ENCODE measurements at regions of chr2 and their contacts with region 1.

Region 1: DNA sequence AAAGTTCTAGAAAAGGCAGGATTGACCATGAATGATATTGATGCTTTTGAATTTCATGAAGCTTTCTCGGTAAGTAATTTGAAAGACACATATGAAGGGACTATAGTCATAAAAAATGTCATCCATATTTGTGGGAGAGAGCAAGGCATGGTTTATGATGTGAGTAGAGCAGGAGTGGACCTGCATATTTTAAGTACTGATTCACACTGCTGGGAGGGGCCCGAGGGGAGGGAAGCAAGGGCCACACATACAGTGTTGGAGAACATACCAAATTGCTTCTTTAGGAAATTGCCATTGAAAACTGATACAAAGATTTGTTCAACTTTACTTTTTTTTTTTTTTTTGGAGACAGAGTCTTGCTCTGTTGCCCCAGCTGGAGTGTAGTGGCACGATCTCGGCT is 39.4 kb downstream of the HADHB start:
- DNase-seq: no peak
- ATAC-seq: peak in 2 of 4 donors; percentile 26 to 41
- H3K4me3 ChIP-seq: no peak overlapping the region
- H3K27ac ChIP-seq: no peak overlapping the region
- H3K4me1 ChIP-seq: no peaks in the 10 kb centered on the region
- H3K27me3 ChIP-seq: no peaks in the 10 kb centered on the region
- CTCF ChIP-seq: no peak

Region 2: DNA sequence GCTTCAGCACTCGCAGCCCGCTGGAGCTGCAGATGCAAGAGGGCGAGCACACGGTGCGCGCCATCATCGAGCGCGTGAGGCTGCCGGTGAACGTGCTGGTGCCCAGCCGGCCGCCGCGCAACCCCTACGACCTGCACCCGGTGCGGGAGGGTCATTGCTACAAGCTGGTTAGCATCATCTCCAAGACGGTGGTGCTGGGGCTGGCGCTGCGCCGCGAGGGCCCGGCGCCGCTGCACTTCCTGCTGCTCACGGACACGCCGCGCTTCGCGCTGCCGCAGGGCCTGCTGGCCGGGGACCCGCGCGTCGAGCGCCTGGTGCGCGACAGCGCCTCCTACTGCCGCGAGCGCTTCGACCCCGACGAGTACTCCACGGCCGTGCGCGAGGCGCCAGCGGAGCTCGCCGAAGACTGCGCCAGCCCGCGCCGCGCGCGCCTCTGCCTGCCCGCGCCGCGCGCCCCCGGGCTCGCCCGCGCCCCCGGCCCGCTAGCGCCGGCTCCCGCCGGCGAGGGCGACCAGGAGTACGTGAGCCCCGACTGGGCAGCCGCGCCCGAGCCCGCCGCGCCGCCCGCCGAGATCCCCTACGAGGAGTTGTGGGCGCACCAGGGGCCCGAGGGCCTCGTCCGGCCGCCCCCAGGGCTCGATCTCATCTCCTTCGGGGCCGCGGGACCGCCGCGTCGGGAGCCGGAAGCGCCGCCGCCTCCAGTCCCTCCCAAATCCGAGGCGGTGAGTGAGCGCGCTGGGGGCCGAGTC is 99.4 kb before region 1 on chr2:
- intact Hi-C with region 1: no loop called
- DNase-seq: peak; percentile 87 to 94
- ATAC-seq: peak; percentile 76 to 87 (median 78)
- H3K4me3 ChIP-seq: peak overlapping the region; percentile 76
- H3K27ac ChIP-seq: no peak overlapping the region
- H3K4me1 ChIP-seq: no peaks in the 10 kb centered on the region
- H3K27me3 ChIP-seq: peaks cover 0 to 4% (median 0%) of the 10 kb centered on the region in 3 donors
- CTCF ChIP-seq: peak; percentile 59

Region 3: GRCh38 chr2:26214759-26215158 is 69.4 kb before region 1 on chr2:
- intact Hi-C with region 1: loop called in 1 of 2 experiments (anchors 5 kb)
- DNase-seq: no peak
- ATAC-seq: no peak
- H3K4me3 ChIP-seq: no peak overlapping the region
- H3K27ac ChIP-seq: no peak overlapping the region
- H3K4me1 ChIP-seq: no peaks in the 10 kb centered on the region
- H3K27me3 ChIP-seq: no peaks in the 10 kb centered on the region
- CTCF ChIP-seq: no peak

Measured in psoas muscle (tissue), 8 donors.